Activated T-helper 2 cell treated with anti-CD3 and anti-CD28 coated beads, Interferon-gamma antibody, Interleukin-2, Interleukin-4, amounts not matched to agents 10 μg/mL and 5 μg/mL and 100 μg/mL, durations not matched to agents 14 hours and 24 hours and 36 hours (primary cell): ENCODE measurements at regions of chr17 and their contacts with region 1.

Region 1: DNA sequence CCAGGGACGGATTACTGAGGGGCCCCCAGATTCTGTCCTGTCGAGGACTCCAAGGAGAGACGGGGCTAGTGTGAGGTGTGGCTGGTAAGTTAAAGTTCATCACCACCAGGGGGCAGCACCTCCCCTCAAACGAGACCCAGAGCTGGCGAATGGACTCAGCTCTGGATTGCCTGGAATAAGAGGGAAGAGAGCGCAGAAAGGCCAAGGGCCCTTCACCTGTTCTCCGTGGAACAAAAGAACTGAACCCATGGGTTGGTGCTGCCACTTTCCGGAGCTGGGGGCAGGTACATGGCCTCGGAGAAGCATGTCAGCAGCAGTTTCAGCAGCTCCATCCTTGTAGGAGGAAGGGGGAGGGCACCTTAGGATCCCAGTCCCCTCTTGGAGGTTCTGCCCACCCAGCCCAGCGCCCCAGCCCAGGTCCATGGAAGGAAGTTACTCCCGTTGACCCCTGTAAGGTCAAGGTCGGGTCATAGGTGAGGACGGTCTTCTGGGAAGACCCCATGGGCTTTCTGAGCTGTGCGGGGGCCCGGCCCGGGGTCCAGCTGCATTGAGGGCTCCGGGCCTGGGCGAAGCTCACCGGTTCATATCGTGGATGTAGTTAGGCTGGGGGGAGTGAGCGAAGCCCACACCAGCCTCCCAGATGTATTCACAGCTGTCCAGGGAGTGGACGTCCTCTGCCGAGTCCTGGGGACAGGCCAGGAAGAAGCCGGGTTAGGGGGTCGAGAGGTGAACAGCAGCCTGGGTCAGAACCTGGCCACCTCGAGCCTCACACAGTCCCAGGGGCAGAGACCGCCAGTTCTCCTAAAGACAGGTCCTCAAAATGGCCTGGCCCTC is 10.7 kb downstream of the HID1 start:
- DNase-seq: peak; percentile 71
- H3K4me3 Mint-ChIP-seq: no peak overlapping the region
- H3K27ac Mint-ChIP-seq: no peak overlapping the region
- H3K4me1 Mint-ChIP-seq: peaks cover 4% of the 10 kb centered on the region
- H3K27me3 Mint-ChIP-seq: no peaks in the 10 kb centered on the region

Region 2: DNA sequence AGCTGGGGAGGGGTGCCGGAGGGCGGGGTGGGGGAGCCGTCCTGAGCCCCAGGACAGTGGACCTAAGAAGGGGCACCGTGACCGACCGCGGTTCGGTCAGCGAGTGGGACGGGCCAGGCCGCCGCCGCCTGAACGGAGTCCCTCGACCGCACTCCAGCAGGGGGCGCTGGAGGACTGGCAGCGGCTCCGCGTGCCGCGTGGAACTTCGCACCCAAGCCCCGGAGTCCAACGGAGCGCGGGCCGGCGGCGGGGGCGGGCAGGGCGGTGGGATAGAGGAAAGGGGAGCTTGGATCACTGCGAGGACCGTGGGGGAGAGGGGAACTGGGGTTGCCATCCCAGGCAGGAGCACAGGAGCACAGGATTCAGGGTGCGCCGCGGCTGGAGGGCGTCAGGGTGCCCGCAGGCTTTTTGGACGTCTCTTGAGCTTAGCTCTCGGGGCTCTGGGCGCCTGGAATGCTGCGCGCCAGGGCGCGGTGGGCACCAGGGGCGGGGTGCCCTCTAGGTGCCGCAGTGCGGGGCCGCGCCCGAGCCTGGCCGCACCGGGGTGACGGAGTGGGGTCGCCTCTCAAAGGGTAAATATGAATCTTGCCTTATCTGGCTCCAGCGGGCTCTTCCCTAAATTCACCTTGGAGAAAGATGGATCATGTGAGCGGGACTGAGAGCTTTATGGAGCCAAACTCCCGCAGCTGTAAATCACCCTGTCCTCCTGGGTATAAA is 38.2 kb before region 1 on chr17:
- intact Hi-C with region 1: loop called (anchors 1 kb)
- DNase-seq: peak; percentile 64
- H3K4me3 Mint-ChIP-seq: no peak overlapping the region
- H3K27ac Mint-ChIP-seq: no peak overlapping the region
- H3K4me1 Mint-ChIP-seq: no peaks in the 10 kb centered on the region
- H3K27me3 Mint-ChIP-seq: peaks cover 44% of the 10 kb centered on the region

Region 3: DNA sequence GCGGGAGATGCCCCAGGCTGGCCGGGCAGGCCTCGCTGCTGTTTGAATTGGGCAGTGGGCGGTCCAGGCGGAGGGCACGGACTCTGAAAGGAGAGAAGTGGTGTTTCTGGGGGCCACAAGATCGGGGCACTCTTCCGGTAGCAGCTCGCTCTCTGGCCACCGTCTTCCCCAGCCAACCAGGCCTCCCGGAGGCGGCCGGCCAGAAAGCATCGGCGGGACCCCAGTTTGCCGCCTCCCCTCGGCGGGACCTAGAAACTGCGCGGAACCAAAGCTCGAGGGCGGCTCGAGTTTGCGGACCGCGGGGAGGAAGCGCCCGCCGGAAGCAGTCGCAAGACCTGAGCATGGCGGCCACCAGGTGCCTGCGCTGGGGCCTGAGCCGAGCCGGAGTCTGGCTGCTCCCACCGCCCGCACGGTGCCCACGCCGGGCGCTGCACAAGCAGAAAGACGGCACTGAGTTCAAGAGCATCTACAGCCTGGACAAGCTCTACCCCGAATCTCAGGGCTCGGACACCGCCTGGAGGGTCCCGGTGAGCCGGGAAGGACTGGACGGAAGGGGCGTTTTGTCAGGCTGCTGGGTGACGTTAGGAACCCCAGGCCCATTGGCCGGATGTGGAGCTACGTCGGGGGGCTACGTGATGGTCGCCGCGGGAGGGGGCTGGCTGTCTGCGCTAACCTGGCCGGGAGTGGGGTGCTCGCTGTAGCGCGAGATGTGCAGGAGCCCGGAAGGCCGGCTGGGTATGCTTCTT is 50.6 kb after region 1 on chr17 and contains the start of gene MRPL58:
- intact Hi-C with region 1: loop called (anchors 2 kb)
- DNase-seq: peak; percentile 79
- H3K4me3 Mint-ChIP-seq: peak within 1 kb of the TSS; percentile 95
- H3K27ac Mint-ChIP-seq: peak within 1 kb of the TSS; percentile 86
- H3K4me1 Mint-ChIP-seq: peaks cover 22% of the 10 kb centered on the region
- H3K27me3 Mint-ChIP-seq: no peaks in the 10 kb centered on the region
- total RNA-seq, gene MRPL58: 65.4 and 68.1 TPM in 2 replicates

Region 4: DNA sequence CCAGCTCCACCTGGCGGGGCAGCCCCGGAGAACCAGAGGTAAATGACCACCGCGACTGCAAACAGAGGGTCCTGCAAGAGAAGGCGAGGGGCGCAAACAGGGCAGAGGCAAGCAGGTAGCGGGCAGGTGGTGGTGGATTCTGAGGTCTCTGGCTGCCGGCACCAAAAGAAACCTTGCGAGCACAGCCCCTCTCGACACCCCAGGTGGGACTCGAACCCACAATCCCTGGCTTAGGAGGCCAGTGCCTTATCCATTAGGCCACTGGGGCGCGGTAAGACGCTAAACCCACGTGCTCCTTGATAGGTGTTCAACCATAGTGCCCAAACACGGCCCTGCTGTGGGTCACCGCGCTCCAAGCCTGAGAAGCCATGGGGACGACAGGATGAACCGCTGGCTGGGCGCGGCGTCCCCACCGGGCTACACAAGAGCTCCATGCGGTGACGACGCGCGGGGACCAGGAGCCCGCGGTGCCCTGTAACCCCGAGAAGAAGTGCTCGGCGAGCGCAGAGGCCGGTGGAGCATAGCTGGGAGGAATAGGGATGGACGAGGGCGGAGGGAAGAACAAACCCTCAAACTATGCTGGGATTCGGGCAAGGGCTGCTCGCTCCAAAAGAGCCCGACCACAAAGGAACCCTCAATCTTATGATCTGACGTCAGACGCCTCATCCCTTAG is 72.5 kb after region 1 on chr17:
- intact Hi-C with region 1: loop called (anchors 5 kb)
- DNase-seq: peak; percentile 83
- H3K4me3 Mint-ChIP-seq: peak overlapping the region; percentile 93
- H3K27ac Mint-ChIP-seq: peak overlapping the region; percentile 95
- H3K4me1 Mint-ChIP-seq: peaks cover 32% of the 10 kb centered on the region
- H3K27me3 Mint-ChIP-seq: no peaks in the 10 kb centered on the region

Region 5: DNA sequence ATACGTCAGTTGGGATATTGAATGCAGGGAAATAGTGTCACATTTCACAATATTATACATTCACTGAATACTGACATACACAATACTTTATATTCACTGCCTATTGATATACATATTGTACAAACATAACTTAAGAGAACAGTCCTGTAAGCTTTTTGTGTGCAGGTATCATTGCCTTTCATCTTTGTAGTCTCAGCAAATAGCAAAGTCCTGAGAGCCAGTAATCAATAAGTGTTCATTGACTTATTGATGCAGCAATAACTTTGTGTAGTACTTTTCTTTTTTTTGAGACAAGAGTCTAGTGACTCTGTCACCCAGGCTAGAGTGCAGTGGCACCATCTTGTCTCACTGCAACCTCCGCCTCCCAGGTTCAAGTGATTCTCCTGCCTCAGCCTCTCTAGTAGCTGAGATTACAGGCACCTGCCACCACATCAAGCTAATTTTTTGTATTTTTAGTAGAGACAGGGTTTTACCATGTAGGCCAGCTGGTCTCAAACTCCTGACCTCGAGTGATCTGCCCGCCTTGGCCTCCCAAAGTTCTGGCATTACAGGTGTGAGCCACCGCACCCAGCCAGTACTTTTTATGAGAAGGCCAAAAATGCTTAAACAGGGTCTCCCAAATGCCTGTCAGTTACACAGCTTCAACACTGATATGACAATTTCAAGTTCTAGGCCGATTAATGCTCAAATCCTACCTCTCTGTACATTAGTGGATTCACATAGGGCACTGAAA is 238.2 kb after region 1 on chr17:
- intact Hi-C with region 1: loop called (anchors 5 kb)
- DNase-seq: no peak
- H3K4me3 Mint-ChIP-seq: no peak overlapping the region
- H3K27ac Mint-ChIP-seq: no peak overlapping the region
- H3K4me1 Mint-ChIP-seq: peaks cover 5% of the 10 kb centered on the region
- H3K27me3 Mint-ChIP-seq: no peaks in the 10 kb centered on the region